ENCODE measurements at regions of chr20 and their contacts with region 1.

Region 1: DNA sequence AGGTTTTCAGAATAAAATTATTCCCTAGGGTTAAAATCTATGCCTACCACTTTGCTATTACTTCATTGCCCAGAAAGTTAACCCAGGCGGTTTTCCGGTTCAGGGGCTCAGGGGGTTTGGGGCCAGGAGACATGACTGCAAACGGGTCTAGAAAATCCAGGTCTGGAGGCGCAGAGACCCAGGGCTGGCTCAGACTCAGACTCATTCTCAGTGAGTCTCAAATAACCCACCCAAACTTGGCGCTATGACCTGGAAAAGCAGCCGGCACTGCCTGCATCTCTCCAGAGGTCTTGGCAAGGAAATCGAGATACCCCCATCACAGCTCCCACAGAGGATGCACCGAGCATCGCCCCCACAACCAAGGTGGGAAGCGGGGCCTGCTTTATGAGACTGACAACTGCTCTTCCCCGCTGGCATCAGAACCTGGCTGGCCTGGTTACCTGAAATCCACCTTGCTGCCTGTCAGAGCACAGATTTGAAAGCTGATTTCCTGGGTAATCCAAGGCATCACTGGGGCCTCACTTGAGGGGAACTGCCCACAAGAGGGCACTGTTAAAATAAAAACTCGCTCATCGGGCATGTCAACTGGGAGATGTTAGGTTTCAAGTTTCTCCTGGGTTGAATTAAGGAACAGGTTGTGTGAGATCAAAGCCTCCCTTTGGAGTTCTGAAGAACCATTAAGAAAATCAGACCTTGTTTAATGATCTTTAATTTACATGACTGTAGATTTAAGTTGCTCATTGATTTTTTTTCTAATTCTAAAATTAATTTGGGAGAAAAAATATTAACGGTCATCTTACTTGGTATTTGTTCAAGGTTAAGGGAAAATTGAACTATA is 55.1 kb downstream of the KIF16B start:
- DNase-seq: peak in 4 of 5 donors; percentile 51 to 76 (median 68)
- H3K4me3 ChIP-seq: no peak overlapping the region
- H3K27ac ChIP-seq: no peak overlapping the region
- H3K4me1 ChIP-seq: peaks cover 0 to 3% (median 0%) of the 10 kb centered on the region in 3 donors
- H3K27me3 ChIP-seq: no peaks in the 10 kb centered on the region
- CTCF ChIP-seq: peak; percentile 78

Region 2: DNA sequence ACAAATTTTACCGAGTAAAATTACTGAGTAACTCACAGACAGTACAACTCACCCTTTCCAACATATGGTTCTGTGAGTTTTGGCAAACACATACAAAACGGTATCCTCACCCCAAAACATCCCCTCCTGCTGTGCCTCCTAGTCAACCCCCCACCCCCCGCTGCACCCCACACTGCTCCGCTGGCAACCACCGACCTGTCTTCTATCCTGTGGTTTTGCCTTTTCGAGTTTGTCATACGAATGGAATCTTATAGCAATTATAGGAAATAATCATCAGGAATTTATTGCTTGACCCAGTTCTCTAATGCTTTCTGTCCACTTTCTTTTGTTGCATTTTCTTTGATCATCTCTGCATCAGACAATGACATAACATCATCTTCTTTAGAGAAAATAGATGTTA is 257.3 kb before region 1 on chr20:
- intact Hi-C with region 1: no loop called
- DNase-seq: no peak
- H3K4me3 ChIP-seq: no peak overlapping the region
- H3K27ac ChIP-seq: no peak overlapping the region
- H3K4me1 ChIP-seq: peaks cover 0 to 2% (median 0%) of the 10 kb centered on the region in 3 donors
- H3K27me3 ChIP-seq: no peaks in the 10 kb centered on the region
- CTCF ChIP-seq: no peak

Region 3: DNA sequence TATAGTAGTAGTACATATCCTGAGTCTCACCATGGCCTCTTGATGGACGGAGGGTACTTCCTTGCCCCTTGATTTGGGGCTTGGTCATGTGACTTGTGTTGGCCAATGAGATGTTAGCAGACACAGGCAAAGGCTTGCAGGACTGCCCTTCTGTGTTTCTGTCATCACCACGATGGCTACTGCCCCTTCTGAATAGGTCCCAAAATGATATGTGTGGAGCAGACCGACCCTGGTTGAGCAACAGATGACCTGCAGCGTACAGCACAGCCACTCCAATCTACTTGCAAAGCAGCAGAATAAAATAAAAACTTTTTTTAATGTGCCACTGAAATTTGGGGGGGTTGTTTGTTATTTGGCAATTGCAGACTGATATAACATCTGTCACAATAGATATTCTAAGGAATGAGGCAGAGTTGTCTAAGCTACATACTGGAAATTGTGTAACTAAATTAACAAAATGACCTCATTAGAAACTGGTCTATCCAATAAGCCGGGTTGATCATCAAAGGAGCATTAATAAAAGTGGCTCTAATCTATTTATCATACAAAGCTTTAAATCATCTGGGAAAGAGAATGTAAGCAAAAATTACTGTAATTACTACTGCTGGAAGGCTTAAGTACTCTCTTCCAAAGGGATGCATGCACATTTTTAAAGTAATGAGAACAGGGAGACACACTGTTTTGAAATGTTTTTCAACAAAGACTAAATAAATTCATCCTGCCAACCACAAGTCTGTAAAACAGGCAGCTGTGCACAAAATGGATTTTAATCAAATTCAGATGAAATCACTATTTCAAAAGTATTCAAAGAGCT is 154.5 kb before region 1 on chr20:
- intact Hi-C with region 1: no loop called
- DNase-seq: no peak
- H3K4me3 ChIP-seq: no peak overlapping the region
- H3K27ac ChIP-seq: no peak overlapping the region
- H3K4me1 ChIP-seq: no peaks in the 10 kb centered on the region
- H3K27me3 ChIP-seq: no peaks in the 10 kb centered on the region
- CTCF ChIP-seq: no peak

Region 4: GRCh38 chr20:16621435-16622141 is 103.4 kb after region 1 on chr20:
- intact Hi-C with region 1: loop called (anchors 10 kb)
- DNase-seq: no peak
- H3K4me3 ChIP-seq: no peak overlapping the region
- H3K27ac ChIP-seq: no peak overlapping the region
- H3K4me1 ChIP-seq: no peaks in the 10 kb centered on the region
- H3K27me3 ChIP-seq: no peaks in the 10 kb centered on the region
- CTCF ChIP-seq: no peak

Region 5: DNA sequence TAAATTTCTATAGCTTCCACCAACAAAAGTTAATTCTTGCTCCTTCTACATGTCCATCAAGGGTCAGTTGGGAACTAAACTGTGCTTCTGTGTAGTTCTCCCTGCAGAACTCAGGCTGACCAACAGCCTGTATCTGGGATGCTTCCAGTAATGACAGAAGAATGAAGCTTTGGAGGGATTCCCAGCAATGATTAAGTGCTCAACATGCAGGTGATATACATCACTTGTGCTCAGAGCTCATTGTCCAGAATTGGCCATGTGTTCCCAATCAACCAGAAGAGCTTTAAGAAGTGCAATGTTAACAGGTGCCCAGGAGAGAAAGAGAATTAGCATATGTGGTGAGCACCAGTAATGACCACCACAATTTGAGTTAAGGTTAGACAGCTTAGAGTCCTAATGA is 174.3 kb after region 1 on chr20:
- intact Hi-C with region 1: no loop called
- DNase-seq: no peak
- H3K4me3 ChIP-seq: no peak overlapping the region
- H3K27ac ChIP-seq: no peak overlapping the region
- H3K4me1 ChIP-seq: no peaks in the 10 kb centered on the region
- H3K27me3 ChIP-seq: no peaks in the 10 kb centered on the region
- CTCF ChIP-seq: no peak